Heart right ventricle (tissue), 16 donors: ENCODE measurements at regions of chr11 and their contacts with region 1.

Region 1: GRCh38 chr11:67507864-67508485 is at the start of gene CDK2AP2:
- DNase-seq: peak; percentile 100
- ATAC-seq: peak; percentile 76 to 90 (median 84)
- H3K4me3 ChIP-seq: peak within 1 kb of the TSS; percentile 50 to 97 (median 78)
- H3K27ac ChIP-seq: peak within 1 kb of the TSS; percentile 96 to 100 (median 98)
- H3K4me1 ChIP-seq: peaks cover 17 to 47% (median 41%) of the 10 kb centered on the region in 9 donors
- H3K27me3 ChIP-seq: peaks cover 0 to 7% (median 0%) of the 10 kb centered on the region in 7 donors
- CTCF ChIP-seq: no peak
- total RNA-seq, gene CDK2AP2: 29.3 to 94.1 (median 53.4) TPM

Region 2: GRCh38 chr11:67252831-67253239 is 255.1 kb before region 1 on chr11:
- intact Hi-C with region 1: no loop called
- DNase-seq: peak in 1 of 2 donors; percentile 31
- ATAC-seq: peak in 7 of 8 donors; percentile 44 to 70 (median 62)
- H3K4me3 ChIP-seq: no peak overlapping the region
- H3K27ac ChIP-seq: no peak overlapping the region
- H3K4me1 ChIP-seq: peaks cover 0 to 41% (median 14%) of the 10 kb centered on the region in 9 donors
- H3K27me3 ChIP-seq: no peaks in the 10 kb centered on the region
- CTCF ChIP-seq: peak in 7 of 9 donors; percentile 22 to 49 (median 30)

Region 3: GRCh38 chr11:67391304-67392132 is 116.5 kb before region 1 on chr11 and contains the start of gene RAD9A:
- intact Hi-C with region 1: loop called in 2 of 10 experiments (anchors 2 to 10 kb)
- DNase-seq: peak; percentile 95
- ATAC-seq: peak; percentile 82 to 94 (median 88)
- H3K4me3 ChIP-seq: peak within 1 kb of the TSS; percentile 66 to 91 (median 81)
- H3K27ac ChIP-seq: peak within 1 kb of the TSS; percentile 28 to 92 (median 86)
- H3K4me1 ChIP-seq: peaks cover 4 to 29% (median 21%) of the 10 kb centered on the region in 9 donors
- H3K27me3 ChIP-seq: no peaks in the 10 kb centered on the region
- CTCF ChIP-seq: no peak
- total RNA-seq, gene RAD9A: 4.8 to 13.8 (median 6.4) TPM

Region 4: GRCh38 chr11:67468835-67469811 is 38.9 kb before region 1 on chr11 and contains the start of gene TMEM134:
- intact Hi-C with region 1: loop called in 4 of 10 experiments (anchors 1 to 5 kb)
- DNase-seq: peak; percentile 92 to 94
- ATAC-seq: peak; percentile 92 to 96 (median 94)
- H3K4me3 ChIP-seq: peak within 1 kb of the TSS; percentile 67 to 99 (median 84)
- H3K27ac ChIP-seq: peak within 1 kb of the TSS; percentile 44 to 94 (median 89)
- H3K4me1 ChIP-seq: peaks cover 4 to 47% (median 22%) of the 10 kb centered on the region in 9 donors
- H3K27me3 ChIP-seq: no peaks in the 10 kb centered on the region
- CTCF ChIP-seq: peak in 8 of 9 donors; percentile 44 to 73 (median 56)
- total RNA-seq, gene TMEM134: 69.8 to 104 (median 81.2) TPM

Region 5: DNA sequence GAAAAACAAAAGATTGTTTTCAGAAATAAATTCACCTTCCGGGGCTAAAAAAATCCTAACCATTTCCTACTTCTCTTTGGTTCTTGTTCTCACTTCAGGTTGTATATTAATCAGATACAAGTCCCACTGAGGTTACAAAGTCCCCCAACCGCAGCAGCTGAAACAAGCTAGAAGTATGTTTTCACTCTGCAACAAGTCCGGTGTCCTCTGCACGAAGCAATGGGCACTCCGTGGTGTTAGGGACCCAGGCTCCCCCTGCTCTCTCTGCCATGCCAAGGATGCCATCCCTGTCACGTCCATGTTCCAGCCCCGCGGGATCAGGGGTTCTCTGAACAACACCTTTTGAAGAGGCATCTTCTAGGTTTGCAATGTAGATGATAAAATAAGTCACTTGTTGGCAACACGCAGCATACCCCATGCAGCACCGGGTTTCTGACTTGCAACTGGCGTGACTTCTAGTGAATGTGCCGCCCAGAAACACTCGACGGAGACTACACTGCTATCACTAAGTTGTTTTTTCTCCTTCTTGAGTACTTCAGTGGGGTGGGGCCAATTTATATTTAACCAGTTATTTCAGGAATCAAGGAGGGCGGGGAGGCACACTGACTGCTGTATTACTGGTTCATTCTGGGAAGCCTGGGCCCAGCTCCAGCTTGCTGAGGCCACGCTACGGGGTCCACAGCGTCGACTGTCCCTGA is 50.3 kb after region 1 on chr11:
- intact Hi-C with region 1: loop called in 1 of 10 experiments (anchors 5 kb)
- DNase-seq: peak; percentile 61 to 67
- ATAC-seq: peak; percentile 74 to 96 (median 92)
- H3K4me3 ChIP-seq: peak overlapping the region in 3 of 10 donors; percentile 1 to 14 (median 5)
- H3K27ac ChIP-seq: peak overlapping the region in 9 of 10 donors; percentile 16 to 73 (median 51)
- H3K4me1 ChIP-seq: peaks cover 0 to 19% (median 8%) of the 10 kb centered on the region in 9 donors
- H3K27me3 ChIP-seq: peaks cover 0 to 4% (median 0%) of the 10 kb centered on the region in 7 donors
- CTCF ChIP-seq: no peak